Naive thymus-derived CD8-positive, alpha-beta T cell (primary cell): ENCODE measurements at regions of chr19 and their contacts with region 1.

Region 1: GRCh38 chr19:49451430-49452181 is at the start of gene PIH1D1:
- DNase-seq: peak; percentile 76 to 99 (median 94)
- ATAC-seq: peak; percentile 62 to 69
- H3K4me3 Mint-ChIP-seq: peak within 1 kb of the TSS; percentile 95 to 100 (median 99)
- H3K27ac Mint-ChIP-seq: peak within 1 kb of the TSS; percentile 93 to 100 (median 100)
- H3K4me1 Mint-ChIP-seq: peaks cover 22 to 63% (median 61%) of the 10 kb centered on the region in 4 donors
- H3K27me3 Mint-ChIP-seq: no peaks in the 10 kb centered on the region
- polyA plus RNA-seq, gene PIH1D1: 85.3 to 88.9 (median 86.7) TPM

Region 2: DNA sequence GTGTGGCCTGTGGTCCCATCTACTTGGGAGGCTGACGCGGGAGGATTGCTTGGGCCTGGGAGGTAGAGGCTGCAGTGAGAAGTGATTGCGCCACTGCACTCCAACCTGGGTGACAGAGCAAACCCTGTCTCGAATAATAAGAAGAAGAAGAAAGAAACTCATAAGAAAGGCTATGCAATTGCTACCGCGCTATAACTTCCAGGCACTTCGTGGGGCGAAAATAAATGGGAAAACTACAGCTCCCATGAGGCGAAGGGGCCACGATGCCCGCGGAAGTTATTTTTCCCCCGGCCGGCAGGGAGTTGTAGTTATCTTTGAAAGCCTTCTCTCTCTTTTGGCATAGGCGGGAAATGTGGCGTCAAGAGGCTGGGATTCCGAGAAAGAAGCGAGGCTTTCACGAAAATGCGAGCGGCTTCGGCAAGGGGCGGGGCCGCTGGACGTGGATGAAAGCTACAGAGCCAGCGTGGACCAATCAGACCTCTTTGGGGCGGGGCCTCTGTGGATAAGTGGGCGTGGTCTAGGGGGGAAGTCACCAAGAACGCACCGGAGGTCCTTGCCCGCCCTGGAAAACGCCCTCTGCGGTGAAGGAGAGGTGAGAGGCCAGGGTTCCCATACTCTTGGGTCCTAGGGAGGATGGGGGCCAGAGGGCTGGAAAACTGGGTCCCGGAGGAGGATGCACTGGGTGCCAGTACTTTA is 551.7 kb before region 1 on chr19 and contains the start of gene NUCB1:
- POLR2A ChIA-PET with region 1: no interaction called
- DNase-seq: peak; percentile 94 to 99 (median 98)
- ATAC-seq: peak; percentile 92 to 94
- H3K4me3 Mint-ChIP-seq: peak within 1 kb of the TSS; percentile 92 to 99 (median 97)
- H3K27ac Mint-ChIP-seq: peak within 1 kb of the TSS; percentile 89 to 98 (median 96)
- H3K4me1 Mint-ChIP-seq: peaks cover 13 to 49% (median 42%) of the 10 kb centered on the region in 4 donors
- H3K27me3 Mint-ChIP-seq: peaks cover 0 to 6% (median 3%) of the 10 kb centered on the region in 5 donors
- polyA plus RNA-seq, gene NUCB1: 48.6 to 119 (median 82.5) TPM

Region 3: DNA sequence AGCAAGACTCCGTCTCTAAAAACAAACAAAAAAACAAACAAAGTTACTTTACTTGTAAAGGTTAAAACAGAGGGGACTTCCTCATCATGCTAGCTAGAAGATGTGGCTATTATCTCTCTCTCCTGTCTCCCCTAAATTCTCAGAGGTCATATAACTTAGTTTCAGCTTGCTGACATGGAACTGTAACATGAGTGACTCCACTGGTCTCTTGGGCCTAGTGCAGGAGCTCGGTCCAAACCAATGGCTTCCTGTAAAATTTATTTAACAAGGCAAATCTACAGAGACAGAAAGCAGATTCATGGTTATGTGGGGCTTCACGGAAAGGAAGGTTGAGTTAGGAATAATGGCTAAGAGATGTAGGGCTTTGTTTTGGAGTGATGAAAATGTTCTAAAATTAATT is 73.1 kb before region 1 on chr19:
- POLR2A ChIA-PET with region 1: no interaction called
- DNase-seq: no peak
- ATAC-seq: no peak
- H3K4me3 Mint-ChIP-seq: no peak overlapping the region
- H3K27ac Mint-ChIP-seq: no peak overlapping the region
- H3K4me1 Mint-ChIP-seq: peaks cover 0 to 2% (median 0%) of the 10 kb centered on the region in 4 donors
- H3K27me3 Mint-ChIP-seq: peaks cover 0 to 18% (median 8%) of the 10 kb centered on the region in 5 donors

Region 4: GRCh38 chr19:49473868-49474544 is 22.4 kb after region 1 on chr19 and contains the start of gene FLT3LG:
- POLR2A ChIA-PET with region 1: interaction called, 321 read pairs
- DNase-seq: peak; percentile 87 to 98 (median 94)
- ATAC-seq: peak; percentile 46 to 62
- H3K4me3 Mint-ChIP-seq: peak within 1 kb of the TSS; percentile 93 to 99 (median 96)
- H3K27ac Mint-ChIP-seq: peak within 1 kb of the TSS; percentile 92 to 100 (median 98)
- H3K4me1 Mint-ChIP-seq: peaks cover 28 to 72% (median 65%) of the 10 kb centered on the region in 4 donors
- H3K27me3 Mint-ChIP-seq: no peaks in the 10 kb centered on the region
- polyA plus RNA-seq, gene FLT3LG: 108 to 205 (median 166) TPM

Region 5: GRCh38 chr19:49487277-49488045 is 35.9 kb after region 1 on chr19 and contains the start of gene RPL13A:
- POLR2A ChIA-PET with region 1: interaction called, 32 read pairs
- DNase-seq: peak; percentile 98 to 100 (median 99)
- ATAC-seq: peak; percentile 85 to 91
- H3K4me3 Mint-ChIP-seq: peak within 1 kb of the TSS; percentile 89 to 99 (median 97)
- H3K27ac Mint-ChIP-seq: peak within 1 kb of the TSS; percentile 94 to 99 (median 97)
- H3K4me1 Mint-ChIP-seq: peaks cover 9 to 57% (median 45%) of the 10 kb centered on the region in 4 donors
- H3K27me3 Mint-ChIP-seq: peaks cover 0 to 3% (median 0%) of the 10 kb centered on the region in 5 donors
- polyA plus RNA-seq, gene RPL13A: 3,162 to 3,664 (median 3,630) TPM

Region 6: DNA sequence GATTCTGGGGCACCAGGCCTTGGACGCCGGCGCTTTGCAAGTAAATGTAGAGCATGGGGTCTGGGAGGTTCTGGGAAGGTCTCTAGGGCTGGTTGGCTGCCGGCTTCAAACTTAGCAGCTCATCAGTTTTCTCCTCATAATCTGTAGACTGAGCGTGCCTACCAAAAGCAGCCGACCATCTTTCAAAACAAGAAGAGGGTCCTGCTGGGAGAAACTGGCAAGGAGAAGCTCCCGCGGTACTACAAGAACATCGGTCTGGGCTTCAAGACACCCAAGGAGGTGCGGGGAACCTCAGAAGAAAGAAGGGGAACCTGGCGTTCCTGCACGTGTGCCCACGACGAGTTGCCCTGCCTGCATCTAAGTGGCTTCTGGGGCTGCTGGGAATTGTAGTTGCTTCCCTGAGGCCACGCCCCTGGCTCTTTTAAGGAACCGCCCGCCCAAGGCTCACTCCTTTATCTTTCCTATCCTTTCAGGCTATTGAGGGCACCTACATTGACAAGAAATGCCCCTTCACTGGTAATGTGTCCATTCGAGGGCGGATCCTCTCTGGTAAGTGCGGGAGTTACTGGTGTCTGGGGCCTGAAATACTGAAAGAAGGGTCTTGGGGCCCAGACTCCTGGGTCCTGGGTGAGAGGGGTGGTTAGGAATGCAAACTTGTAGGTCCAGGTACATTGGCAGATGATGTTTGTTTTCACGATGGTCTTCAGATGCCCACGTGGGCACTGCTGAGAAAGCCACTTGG is 45.6 kb after region 1 on chr19:
- POLR2A ChIA-PET with region 1: interaction called, 45 read pairs
- DNase-seq: peak; percentile 51 to 87 (median 72)
- ATAC-seq: peak; percentile 3 to 5
- H3K4me3 Mint-ChIP-seq: peak overlapping the region; percentile 96 to 100 (median 100)
- H3K27ac Mint-ChIP-seq: peak overlapping the region; percentile 96 to 100 (median 99)
- H3K4me1 Mint-ChIP-seq: peaks cover 18 to 79% (median 66%) of the 10 kb centered on the region in 4 donors
- H3K27me3 Mint-ChIP-seq: peaks cover 0 to 2% (median 0%) of the 10 kb centered on the region in 5 donors